ENCODE measurements at regions of chr7 and their contacts with region 1.

Region 1: GRCh38 chr7:23298885-23299769 is at the start of gene MALSU1:
- DNase-seq: peak; percentile 89 to 99 (median 96)
- ATAC-seq: peak; percentile 99
- H3K4me3 ChIP-seq: peak within 1 kb of the TSS; percentile 93
- H3K4me3 Mint-ChIP-seq: peak within 1 kb of the TSS; percentile 90
- H3K27ac ChIP-seq: peak within 1 kb of the TSS; percentile 74 to 78
- H3K27ac Mint-ChIP-seq: peak within 1 kb of the TSS; percentile 95
- H3K4me1 ChIP-seq: peaks cover 35% of the 10 kb centered on the region
- H3K4me1 Mint-ChIP-seq: peaks cover 55% of the 10 kb centered on the region
- H3K27me3 ChIP-seq: no peaks in the 10 kb centered on the region
- H3K27me3 Mint-ChIP-seq: no peaks in the 10 kb centered on the region
- CTCF ChIP-seq: no peak
- total RNA-seq, gene MALSU1: 50.5 to 50.9 TPM

Region 2: GRCh38 chr7:22854158-22855048 is 444.7 kb before region 1 on chr7:
- CTCF ChIA-PET with region 1: interaction called, 3 read pairs
- POLR2A ChIA-PET with region 1: no interaction called
- intact Hi-C with region 1: loop called in 1 of 2 experiments (anchors 10 kb)
- DNase-seq: peak; percentile 30 to 90 (median 68)
- ATAC-seq: peak; percentile 21
- H3K4me3 ChIP-seq: peak overlapping the region; percentile 97
- H3K4me3 Mint-ChIP-seq: peak overlapping the region; percentile 97
- H3K27ac ChIP-seq: peak overlapping the region; percentile 69 to 75
- H3K27ac Mint-ChIP-seq: peak overlapping the region; percentile 92
- H3K4me1 ChIP-seq: peaks cover 21% of the 10 kb centered on the region
- H3K4me1 Mint-ChIP-seq: peaks cover 30% of the 10 kb centered on the region
- H3K27me3 ChIP-seq: no peaks in the 10 kb centered on the region
- H3K27me3 Mint-ChIP-seq: peaks cover 3% of the 10 kb centered on the region
- CTCF ChIP-seq: peak; percentile 71

Region 3: DNA sequence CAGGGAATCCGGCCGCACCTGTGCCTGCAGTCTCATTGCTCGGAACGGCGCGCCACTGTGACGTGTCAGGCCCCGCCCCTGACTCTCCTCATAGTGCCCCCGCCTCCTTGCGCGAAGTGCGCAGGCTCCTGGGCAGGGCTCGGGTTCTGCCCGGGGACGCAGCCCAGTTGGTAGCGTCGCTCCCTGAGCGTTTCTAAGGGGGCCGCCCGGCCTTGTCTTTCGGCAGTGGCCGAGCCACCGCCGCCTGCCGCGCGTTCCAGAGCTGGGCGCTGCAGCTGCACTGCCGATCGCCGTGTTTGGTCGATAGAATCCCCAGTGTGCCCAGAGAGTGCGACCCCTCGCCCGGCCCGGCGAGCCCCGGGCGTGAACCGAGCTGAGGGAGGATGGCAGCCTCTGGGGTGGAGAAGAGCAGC is 193.5 kb before region 1 on chr7 and contains the start of gene KLHL7:
- CTCF ChIA-PET with region 1: no interaction called
- POLR2A ChIA-PET with region 1: interaction called, 6 read pairs
- intact Hi-C with region 1: loop called in 1 of 2 experiments (anchors 5 kb)
- DNase-seq: peak; percentile 89 to 98 (median 96)
- ATAC-seq: peak; percentile 94
- H3K4me3 ChIP-seq: peak within 1 kb of the TSS; percentile 98
- H3K4me3 Mint-ChIP-seq: peak within 1 kb of the TSS; percentile 98
- H3K27ac ChIP-seq: peak within 1 kb of the TSS; percentile 94
- H3K27ac Mint-ChIP-seq: peak within 1 kb of the TSS; percentile 96
- H3K4me1 ChIP-seq: peaks cover 19% of the 10 kb centered on the region
- H3K4me1 Mint-ChIP-seq: peaks cover 52% of the 10 kb centered on the region
- H3K27me3 ChIP-seq: no peaks in the 10 kb centered on the region
- H3K27me3 Mint-ChIP-seq: no peaks in the 10 kb centered on the region
- CTCF ChIP-seq: no peak
- total RNA-seq, gene KLHL7: 14.3 to 19.6 TPM

Region 4: GRCh38 chr7:23273141-23273599 is 26.0 kb before region 1 on chr7:
- CTCF ChIA-PET with region 1: interaction called, 12 read pairs
- POLR2A ChIA-PET with region 1: interaction called, 13 read pairs
- intact Hi-C with region 1: no loop called
- DNase-seq: peak; percentile 79 to 96 (median 87)
- ATAC-seq: peak; percentile 97
- H3K4me3 ChIP-seq: peak overlapping the region; percentile 15
- H3K4me3 Mint-ChIP-seq: peak overlapping the region; percentile 26
- H3K27ac ChIP-seq: no peak overlapping the region
- H3K27ac Mint-ChIP-seq: no peak overlapping the region
- H3K4me1 ChIP-seq: peaks cover 8% of the 10 kb centered on the region
- H3K4me1 Mint-ChIP-seq: peaks cover 9% of the 10 kb centered on the region
- H3K27me3 ChIP-seq: no peaks in the 10 kb centered on the region
- H3K27me3 Mint-ChIP-seq: peaks cover 4% of the 10 kb centered on the region
- CTCF ChIP-seq: peak; percentile 90

Region 5: GRCh38 chr7:23474094-23474828 is 175.1 kb after region 1 on chr7:
- CTCF ChIA-PET with region 1: no interaction called
- POLR2A ChIA-PET with region 1: interaction called, 4 read pairs
- intact Hi-C with region 1: loop called in 1 of 2 experiments (anchors 5 kb)
- DNase-seq: peak in 7 of 14 experiments; percentile 25 to 73 (median 44)
- ATAC-seq: peak; percentile 38
- H3K4me3 ChIP-seq: no peak overlapping the region
- H3K4me3 Mint-ChIP-seq: peak overlapping the region; percentile 11
- H3K27ac ChIP-seq: no peak overlapping the region
- H3K27ac Mint-ChIP-seq: no peak overlapping the region
- H3K4me1 ChIP-seq: peaks cover 40% of the 10 kb centered on the region
- H3K4me1 Mint-ChIP-seq: peaks cover 37% of the 10 kb centered on the region
- H3K27me3 ChIP-seq: peaks cover 50 to 96% of the 10 kb centered on the region in 2 experiments
- H3K27me3 Mint-ChIP-seq: peaks cover 79% of the 10 kb centered on the region
- CTCF ChIP-seq: no peak

Region 6: DNA sequence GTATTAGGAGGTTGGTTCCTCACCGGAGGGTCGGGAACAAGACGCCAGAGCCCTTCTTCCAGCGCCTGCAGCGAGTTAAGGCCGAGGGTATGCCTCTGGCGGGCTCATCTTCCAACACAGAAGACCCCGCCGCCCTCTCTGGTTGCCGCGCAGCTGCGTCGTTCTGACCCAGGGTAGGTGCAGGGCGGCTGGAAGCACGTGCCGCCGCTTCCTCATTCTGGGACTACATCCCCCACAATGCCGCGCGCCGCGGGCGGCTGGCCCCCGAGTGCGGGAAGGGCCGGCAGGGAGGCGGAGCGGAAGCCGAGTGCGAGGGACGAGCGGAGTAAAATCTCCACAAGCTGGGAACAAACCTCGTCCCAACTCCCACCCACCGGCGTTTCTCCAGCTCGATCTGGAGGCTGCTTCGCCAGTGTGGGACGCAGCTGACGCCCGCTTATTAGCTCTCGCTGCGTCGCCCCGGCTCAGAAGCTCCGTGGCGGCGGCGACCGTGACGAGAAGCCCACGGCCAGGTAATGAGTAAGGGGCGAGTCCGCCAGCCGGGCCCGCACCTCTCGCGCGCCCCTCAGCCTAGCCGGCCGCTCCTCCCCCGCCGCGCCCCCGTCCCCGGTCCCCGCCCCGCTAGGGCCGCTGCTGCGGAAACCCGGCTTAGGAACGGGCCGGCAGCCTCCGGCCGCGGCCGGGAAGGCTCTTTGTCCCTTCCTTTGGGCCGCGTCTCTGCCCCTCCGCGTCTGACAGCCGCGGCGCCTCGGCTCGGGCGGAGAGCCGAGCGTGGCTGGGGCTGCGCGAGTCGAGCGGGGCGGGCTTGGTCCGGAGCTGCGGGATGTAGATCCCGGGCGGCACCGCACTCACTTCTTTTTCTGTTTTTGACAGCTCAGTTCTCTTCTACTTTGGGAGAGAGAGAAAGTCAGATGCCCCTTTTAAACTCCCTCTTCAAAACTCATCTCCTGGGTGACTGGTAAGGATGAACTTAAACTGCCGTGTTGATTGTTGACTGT is 298.3 kb after region 1 on chr7 and contains the start of gene CCDC126:
- CTCF ChIA-PET with region 1: no interaction called
- POLR2A ChIA-PET with region 1: interaction called, 3 read pairs
- intact Hi-C with region 1: loop called in 1 of 2 experiments (anchors 5 kb)
- DNase-seq: peak; percentile 57 to 89 (median 76)
- ATAC-seq: peak; percentile 90
- H3K4me3 ChIP-seq: peak within 1 kb of the TSS; percentile 86
- H3K4me3 Mint-ChIP-seq: peak within 1 kb of the TSS; percentile 95
- H3K27ac ChIP-seq: peak within 1 kb of the TSS in 1 of 2 donors; percentile 75
- H3K27ac Mint-ChIP-seq: peak within 1 kb of the TSS; percentile 80
- H3K4me1 ChIP-seq: peaks cover 17% of the 10 kb centered on the region
- H3K4me1 Mint-ChIP-seq: peaks cover 32% of the 10 kb centered on the region
- H3K27me3 ChIP-seq: no peaks in the 10 kb centered on the region
- H3K27me3 Mint-ChIP-seq: no peaks in the 10 kb centered on the region
- CTCF ChIP-seq: no peak
- total RNA-seq, gene CCDC126: 8.3 to 10.3 TPM

Region 7: GRCh38 chr7:25125137-25125946 is 1826.2 kb after region 1 on chr7 and contains the start of gene CYCS:
- CTCF ChIA-PET with region 1: no interaction called
- POLR2A ChIA-PET with region 1: no interaction called
- intact Hi-C with region 1: loop called in 1 of 2 experiments (anchors 5 kb)
- DNase-seq: peak; percentile 99 to 100 (median 99)
- ATAC-seq: peak; percentile 90
- H3K4me3 ChIP-seq: peak within 1 kb of the TSS; percentile 92
- H3K4me3 Mint-ChIP-seq: peak within 1 kb of the TSS; percentile 99
- H3K27ac ChIP-seq: peak within 1 kb of the TSS; percentile 92 to 94
- H3K27ac Mint-ChIP-seq: peak within 1 kb of the TSS; percentile 99
- H3K4me1 ChIP-seq: peaks cover 14% of the 10 kb centered on the region
- H3K4me1 Mint-ChIP-seq: peaks cover 40% of the 10 kb centered on the region
- H3K27me3 ChIP-seq: no peaks in the 10 kb centered on the region
- H3K27me3 Mint-ChIP-seq: no peaks in the 10 kb centered on the region
- CTCF ChIP-seq: no peak
- total RNA-seq, gene CYCS: 126 to 131 TPM